ENCODE measurements at regions of chr13 and their contacts with region 1.

Region 1: GRCh38 chr13:72696579-72696978 is 30.9 kb downstream of the MZT1 start:
- DNase-seq: no peak
- H3K4me3 ChIP-seq: no peak overlapping the region
- H3K4me3 Mint-ChIP-seq: no peak overlapping the region
- H3K27ac Mint-ChIP-seq: no peak overlapping the region
- H3K4me1 ChIP-seq: no peaks in the 10 kb centered on the region
- H3K4me1 Mint-ChIP-seq: no peaks in the 10 kb centered on the region
- H3K27me3 ChIP-seq: no peaks in the 10 kb centered on the region
- H3K27me3 Mint-ChIP-seq: no peaks in the 10 kb centered on the region
- CTCF ChIP-seq: peak in 1 of 2 experiments; percentile 58

Region 2: GRCh38 chr13:72341904-72342303 is 354.7 kb before region 1 on chr13:
- CTCF ChIA-PET with region 1: no interaction called
- POLR2A ChIA-PET with region 1: no interaction called
- intact Hi-C with region 1: loop called (anchors 1 kb)
- DNase-seq: peak in 1 of 2 experiments; percentile 28
- H3K4me3 ChIP-seq: no peak overlapping the region
- H3K4me3 Mint-ChIP-seq: no peak overlapping the region
- H3K27ac Mint-ChIP-seq: no peak overlapping the region
- H3K4me1 ChIP-seq: no peaks in the 10 kb centered on the region
- H3K4me1 Mint-ChIP-seq: no peaks in the 10 kb centered on the region
- H3K27me3 ChIP-seq: no peaks in the 10 kb centered on the region
- H3K27me3 Mint-ChIP-seq: peaks cover 12% of the 10 kb centered on the region
- CTCF ChIP-seq: peak; percentile 19 to 39

Region 3: DNA sequence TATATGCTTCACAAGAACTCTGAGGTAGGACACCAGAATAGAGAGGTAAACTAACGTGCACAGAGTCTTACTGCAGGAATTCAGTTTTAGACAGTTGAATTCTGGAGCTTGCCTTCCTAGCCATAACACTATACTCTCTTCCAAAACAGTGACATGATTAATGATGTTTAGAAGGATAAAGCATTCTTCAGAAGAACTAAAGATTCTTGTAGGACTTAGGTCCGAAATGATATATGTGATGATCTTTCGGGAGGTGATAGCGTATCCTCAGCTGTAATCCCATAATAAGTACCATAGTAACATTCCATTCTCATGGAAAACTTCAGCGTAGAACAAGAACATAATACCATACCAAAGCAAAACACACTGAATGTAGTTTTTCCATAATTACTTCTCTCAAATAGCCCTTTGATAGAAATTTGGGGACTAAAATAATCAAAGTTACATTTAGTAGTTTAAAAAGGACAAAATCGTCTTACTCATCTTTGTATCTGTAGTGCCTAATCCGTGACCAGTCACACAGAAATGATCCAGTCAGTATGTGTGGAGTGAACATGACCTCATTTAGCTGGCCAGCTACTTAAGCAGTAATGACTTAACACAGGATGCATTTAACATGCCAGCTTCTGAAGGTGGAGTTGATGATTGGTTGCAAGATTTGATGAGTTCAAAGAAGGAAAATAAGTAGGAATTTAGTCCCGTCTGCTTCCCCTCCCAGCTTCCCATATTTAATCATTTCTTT is 123.7 kb after region 1 on chr13:
- CTCF ChIA-PET with region 1: no interaction called
- POLR2A ChIA-PET with region 1: no interaction called
- intact Hi-C with region 1: no loop called
- DNase-seq: no peak
- H3K4me3 ChIP-seq: no peak overlapping the region
- H3K4me3 Mint-ChIP-seq: no peak overlapping the region
- H3K27ac Mint-ChIP-seq: no peak overlapping the region
- H3K4me1 ChIP-seq: no peaks in the 10 kb centered on the region
- H3K4me1 Mint-ChIP-seq: no peaks in the 10 kb centered on the region
- H3K27me3 ChIP-seq: no peaks in the 10 kb centered on the region
- H3K27me3 Mint-ChIP-seq: no peaks in the 10 kb centered on the region
- CTCF ChIP-seq: no peak

Region 4: DNA sequence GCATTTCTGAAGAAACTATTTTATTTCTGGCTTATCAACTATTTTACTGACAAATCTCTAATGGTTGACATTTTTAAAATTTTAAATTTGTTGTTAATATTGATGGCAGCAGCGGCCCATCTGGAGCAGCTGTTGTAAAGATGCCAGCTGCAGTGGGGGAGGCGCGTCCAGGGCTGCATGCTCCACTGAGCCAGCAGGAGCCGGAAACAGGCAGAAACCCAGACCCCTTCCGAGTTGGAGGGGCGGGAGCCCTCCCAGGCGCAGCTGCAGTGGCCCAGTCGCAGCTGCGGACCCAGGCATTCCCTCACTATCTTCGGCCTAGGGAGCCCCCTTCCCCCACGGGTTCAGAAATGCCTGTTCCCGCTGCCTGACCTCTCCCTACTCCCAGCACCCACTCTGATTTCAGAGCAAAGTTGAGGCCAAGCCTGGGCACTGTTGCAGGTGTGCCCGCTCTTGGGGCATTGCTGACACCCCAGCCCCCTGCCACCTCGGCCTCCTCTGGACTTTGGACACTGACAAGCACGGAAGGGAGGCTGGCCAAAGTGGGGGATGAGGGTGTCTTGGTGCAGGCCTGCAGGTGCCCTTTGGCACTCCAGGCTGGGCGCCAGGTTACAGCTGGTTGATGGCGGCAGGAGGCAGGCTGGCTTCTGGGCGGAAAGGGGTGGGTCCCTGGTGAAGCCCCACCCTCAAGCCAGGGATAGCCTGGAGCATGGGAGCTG is 154.5 kb after region 1 on chr13:
- CTCF ChIA-PET with region 1: no interaction called
- POLR2A ChIA-PET with region 1: no interaction called
- intact Hi-C with region 1: no loop called
- DNase-seq: no peak
- H3K4me3 ChIP-seq: no peak overlapping the region
- H3K4me3 Mint-ChIP-seq: no peak overlapping the region
- H3K27ac Mint-ChIP-seq: no peak overlapping the region
- H3K4me1 ChIP-seq: no peaks in the 10 kb centered on the region
- H3K4me1 Mint-ChIP-seq: no peaks in the 10 kb centered on the region
- H3K27me3 ChIP-seq: no peaks in the 10 kb centered on the region
- H3K27me3 Mint-ChIP-seq: no peaks in the 10 kb centered on the region
- CTCF ChIP-seq: no peak